HepG2 (cell line): ENCODE measurements at regions of chr6 and their contacts with region 1.

Region 1: GRCh38 chr6:55286824-55287223 is 40.4 kb upstream of the GFRAL start:
- DNase-seq: no peak
- ATAC-seq: no peak
- H3K4me3 ChIP-seq: no peak overlapping the region
- H3K27ac ChIP-seq: no peak overlapping the region
- H3K4me1 ChIP-seq: no peaks in the 10 kb centered on the region
- H3K27me3 ChIP-seq: no peaks in the 10 kb centered on the region
- CTCF ChIP-seq: no peak
- EP300 ChIP-seq: no peak
- POLR2A ChIP-seq: no peak
- RAD21 ChIP-seq: no peak

Region 2: DNA sequence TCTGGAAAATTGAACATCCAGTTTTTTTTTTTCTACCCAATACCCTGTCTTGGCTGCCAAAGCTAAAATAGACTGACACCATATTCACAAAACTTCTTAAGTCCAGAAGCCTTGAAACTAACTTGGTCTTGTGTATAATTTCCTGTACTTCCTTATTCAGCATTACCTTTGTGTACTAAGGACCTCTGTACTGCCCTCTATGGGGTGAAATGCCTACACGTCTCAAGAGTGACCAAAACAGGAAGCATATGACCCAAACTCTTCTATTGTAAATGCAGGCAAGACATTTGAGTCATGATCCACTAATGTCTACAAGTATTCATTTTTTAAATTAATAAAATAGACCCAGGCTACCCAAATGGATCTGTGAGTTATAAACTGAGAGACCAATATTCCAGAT is 241.8 kb after region 1 on chr6:
- CTCF ChIA-PET with region 1: no interaction called
- POLR2A ChIA-PET with region 1: no interaction called
- in situ Hi-C with region 1: no loop called
- intact Hi-C with region 1: loop called (anchors 10 kb)
- DNase-seq: peak; percentile 43
- ATAC-seq: peak; percentile 90
- H3K4me3 ChIP-seq: no peak overlapping the region
- H3K27ac ChIP-seq: no peak overlapping the region
- H3K4me1 ChIP-seq: no peaks in the 10 kb centered on the region
- H3K27me3 ChIP-seq: no peaks in the 10 kb centered on the region
- CTCF ChIP-seq: peak; percentile 34
- EP300 ChIP-seq: no peak
- POLR2A ChIP-seq: no peak
- RAD21 ChIP-seq: no peak

Region 3: GRCh38 chr6:55543633-55544309 is 256.9 kb after region 1 on chr6:
- CTCF ChIA-PET with region 1: no interaction called
- POLR2A ChIA-PET with region 1: no interaction called
- in situ Hi-C with region 1: no loop called
- intact Hi-C with region 1: no loop called
- DNase-seq: peak; percentile 21
- ATAC-seq: peak; percentile 100
- H3K4me3 ChIP-seq: no peak overlapping the region
- H3K27ac ChIP-seq: no peak overlapping the region
- H3K4me1 ChIP-seq: no peaks in the 10 kb centered on the region
- H3K27me3 ChIP-seq: no peaks in the 10 kb centered on the region
- CTCF ChIP-seq: no peak; the same call in 1 of the 2 replicates
- EP300 ChIP-seq: no peak
- POLR2A ChIP-seq: no peak
- RAD21 ChIP-seq: no peak